ENCODE measurements at regions of chr19 and their contacts with region 1.

Region 1: DNA sequence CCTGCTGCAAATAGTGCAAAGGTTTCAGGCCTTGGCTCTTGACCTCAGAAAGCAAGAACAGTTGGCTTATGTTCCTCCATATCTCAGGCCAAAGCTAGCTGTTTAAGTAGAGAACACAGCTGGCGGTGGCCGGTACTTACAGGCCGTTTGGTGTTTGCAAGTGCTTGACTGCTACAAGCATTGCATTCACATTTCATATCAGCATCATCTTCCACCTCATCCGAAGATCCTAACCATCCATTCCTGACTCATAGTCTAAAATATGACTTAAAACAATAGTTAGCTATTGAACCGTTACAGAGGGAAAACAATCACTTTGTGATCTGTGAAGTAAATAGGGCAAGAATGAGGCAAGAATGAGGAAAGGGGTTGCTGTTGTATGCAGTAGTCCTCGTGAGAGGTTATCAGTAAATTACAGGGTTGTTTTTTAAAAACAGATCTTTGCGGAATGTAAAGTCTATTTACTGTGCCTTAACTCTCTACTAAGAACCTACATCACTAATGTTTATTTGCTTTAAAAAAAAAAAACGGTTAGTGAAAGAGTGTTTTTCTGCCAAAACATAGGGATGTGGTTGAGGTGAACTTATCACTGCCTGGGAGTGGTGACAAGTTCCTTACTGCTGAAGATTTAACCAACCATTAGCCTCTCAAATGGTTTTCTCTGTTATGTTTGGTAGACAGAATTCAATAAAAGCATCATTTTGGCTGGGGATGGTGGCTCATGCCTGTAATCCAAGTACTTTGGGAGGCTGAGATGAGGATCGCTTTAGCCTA is 21.6 kb upstream of the WDR88 start:
- DNase-seq: peak; percentile 19
- H3K4me3 ChIP-seq: no peak overlapping the region
- H3K27ac ChIP-seq: no peak overlapping the region
- H3K4me1 ChIP-seq: no peaks in the 10 kb centered on the region
- H3K27me3 ChIP-seq: no peaks in the 10 kb centered on the region
- CTCF ChIP-seq: no peak

Region 2: GRCh38 chr19:32988724-32989123 is 121.6 kb before region 1 on chr19:
- CTCF ChIA-PET with region 1: no interaction called
- dilution Hi-C with region 1: loop called (anchors 10 kb)
- in situ Hi-C with region 1: no loop called
- intact Hi-C with region 1: no loop called
- DNase-seq: no peak
- H3K4me3 ChIP-seq: no peak overlapping the region
- H3K27ac ChIP-seq: no peak overlapping the region
- H3K4me1 ChIP-seq: no peaks in the 10 kb centered on the region
- H3K27me3 ChIP-seq: no peaks in the 10 kb centered on the region
- CTCF ChIP-seq: no peak

Region 3: DNA sequence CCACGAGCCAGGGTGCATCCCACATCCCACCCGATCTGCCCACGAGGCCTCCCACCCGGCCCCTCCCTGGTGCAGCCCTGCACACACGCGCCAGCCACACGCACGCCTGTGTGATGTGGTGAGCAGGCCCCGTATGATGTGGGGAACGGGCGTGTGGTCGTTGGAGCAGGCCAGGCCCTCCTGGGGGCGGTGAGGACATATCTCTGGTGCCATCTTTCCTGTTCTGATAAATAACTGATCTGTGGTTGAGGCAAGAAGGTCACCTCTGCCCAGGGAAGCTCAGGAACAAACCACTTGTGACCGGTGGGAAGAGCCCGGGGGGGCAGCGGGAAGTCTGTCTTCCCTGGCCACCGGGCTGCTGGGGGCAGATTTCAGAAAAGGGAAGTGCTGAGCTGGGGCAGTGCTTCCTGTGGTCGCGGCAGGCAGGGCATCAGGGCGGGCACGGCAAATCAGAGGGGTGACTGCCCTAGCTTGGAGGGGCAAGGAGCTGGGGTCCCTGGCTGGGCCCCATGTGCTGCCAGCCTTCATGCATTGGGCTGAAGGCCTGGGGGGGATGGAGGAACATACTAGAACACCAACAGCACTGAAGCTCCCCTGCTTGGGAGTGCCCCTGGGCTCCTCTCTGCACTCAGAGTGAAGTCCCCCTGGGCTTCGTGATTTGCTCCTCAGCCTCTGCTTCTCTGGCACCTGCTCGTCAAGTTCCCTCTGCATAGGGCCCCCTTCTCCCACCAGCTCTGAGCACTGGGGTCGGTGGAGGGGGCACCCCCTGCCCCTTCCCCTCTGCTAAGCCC is 150.5 kb after region 1 on chr19:
- CTCF ChIA-PET with region 1: no interaction called
- dilution Hi-C with region 1: no loop called
- in situ Hi-C with region 1: no loop called
- intact Hi-C with region 1: no loop called
- DNase-seq: no peak
- H3K4me3 ChIP-seq: no peak overlapping the region
- H3K27ac ChIP-seq: no peak overlapping the region
- H3K4me1 ChIP-seq: no peaks in the 10 kb centered on the region
- H3K27me3 ChIP-seq: no peaks in the 10 kb centered on the region
- CTCF ChIP-seq: no peak

Measured in mammary epithelial cell (primary cell).